SK-N-SH (cell line): ENCODE measurements at regions of chr2 and their contacts with region 1.

Region 1: GRCh38 chr2:219002395-219003266 is 9.4 kb upstream of the CRYBA2 start:
- DNase-seq: peak; percentile 89
- H3K4me3 ChIP-seq: peak overlapping the region; percentile 51 to 54
- H3K27ac ChIP-seq: peak overlapping the region in 1 of 2 experiments; percentile 99; a peak in 2 of 4 replicates
- H3K4me1 ChIP-seq: peaks cover 0 to 60% of the 10 kb centered on the region in 2 experiments; a peak in 2 of 4 replicates
- H3K27me3 ChIP-seq: peaks cover 18% of the 10 kb centered on the region; the same call in 1 of the 2 replicates
- CTCF ChIP-seq: peak; percentile 35; the same call in 1 of the 2 replicates
- EP300 ChIP-seq: no peak
- RAD21 ChIP-seq: peak; percentile 66

Region 2: GRCh38 chr2:218876562-218877219 is 125.9 kb before region 1 on chr2:
- CTCF ChIA-PET with region 1: interaction called, 28 read pairs
- POLR2A ChIA-PET with region 1: no interaction called
- DNase-seq: peak; percentile 88
- H3K4me3 ChIP-seq: no peak overlapping the region
- H3K27ac ChIP-seq: peak overlapping the region in 1 of 2 experiments; percentile 78; a peak in 2 of 4 replicates
- H3K4me1 ChIP-seq: peaks cover 0 to 54% of the 10 kb centered on the region in 2 experiments; a peak in 2 of 4 replicates
- H3K27me3 ChIP-seq: peaks cover 39% of the 10 kb centered on the region
- CTCF ChIP-seq: peak; percentile 95
- EP300 ChIP-seq: peak in 1 of 2 experiments; percentile 26; a peak in 1 of 4 replicates
- RAD21 ChIP-seq: peak; percentile 95

Region 3: DNA sequence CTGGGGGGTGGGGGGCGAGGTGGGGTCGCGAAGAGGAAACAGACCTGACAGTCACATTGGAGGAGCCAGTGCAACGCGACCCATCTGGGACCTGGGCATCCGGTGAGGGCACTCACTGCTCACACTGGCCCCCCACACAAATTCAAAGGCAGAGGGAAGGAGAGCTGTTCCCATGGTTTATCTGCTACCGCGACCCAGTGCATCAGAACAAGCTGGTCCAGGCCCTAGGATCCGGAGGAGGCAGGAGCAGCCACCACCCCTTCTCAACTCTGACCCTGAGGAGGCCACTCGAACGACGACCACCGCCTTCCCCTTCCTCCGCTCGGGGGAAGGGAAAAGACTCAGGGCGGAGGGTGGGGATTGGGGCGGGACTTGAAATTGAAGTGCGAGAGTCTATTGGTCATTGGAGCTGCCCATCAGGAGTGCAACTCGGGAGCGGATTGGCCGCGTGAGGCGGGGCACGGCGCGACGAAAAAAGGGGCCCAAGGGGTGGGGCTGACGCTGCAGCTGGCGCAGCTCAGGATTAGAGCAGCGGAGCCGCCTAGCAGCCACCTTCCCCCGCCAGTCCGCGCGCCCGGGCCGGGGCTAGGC is 43.4 kb before region 1 on chr2 and contains the start of gene CDK5R2:
- CTCF ChIA-PET with region 1: interaction called, 12 read pairs
- POLR2A ChIA-PET with region 1: interaction called, 13 read pairs
- DNase-seq: peak; percentile 98
- H3K4me3 ChIP-seq: peak within 1 kb of the TSS; percentile 60 to 63
- H3K27ac ChIP-seq: peak within 1 kb of the TSS in 1 of 2 experiments; percentile 94; a peak in 2 of 4 replicates
- H3K4me1 ChIP-seq: peaks cover 8 to 47% of the 10 kb centered on the region in 2 experiments; a peak in 2 of 4 replicates
- H3K27me3 ChIP-seq: peaks cover 41% of the 10 kb centered on the region
- CTCF ChIP-seq: no peak
- EP300 ChIP-seq: peak in 1 of 2 experiments; percentile 32; a peak in 1 of 4 replicates
- RAD21 ChIP-seq: no peak
- polyA plus RNA-seq, gene CDK5R2: 0.19 and 0.26 TPM in 2 replicates

Region 4: GRCh38 chr2:219057709-219058540 is 55.3 kb after region 1 on chr2:
- CTCF ChIA-PET with region 1: interaction called, 11 read pairs
- POLR2A ChIA-PET with region 1: interaction called, 3 read pairs
- DNase-seq: peak; percentile 86
- H3K4me3 ChIP-seq: peak overlapping the region in 1 of 2 experiments; percentile 35; a peak in 1 of 4 replicates
- H3K27ac ChIP-seq: no peak overlapping the region
- H3K4me1 ChIP-seq: peaks cover 0 to 16% of the 10 kb centered on the region in 2 experiments; a peak in 1 of 4 replicates
- H3K27me3 ChIP-seq: peaks cover 43% of the 10 kb centered on the region
- CTCF ChIP-seq: peak; percentile 78
- EP300 ChIP-seq: no peak
- RAD21 ChIP-seq: peak; percentile 77

Region 5: DNA sequence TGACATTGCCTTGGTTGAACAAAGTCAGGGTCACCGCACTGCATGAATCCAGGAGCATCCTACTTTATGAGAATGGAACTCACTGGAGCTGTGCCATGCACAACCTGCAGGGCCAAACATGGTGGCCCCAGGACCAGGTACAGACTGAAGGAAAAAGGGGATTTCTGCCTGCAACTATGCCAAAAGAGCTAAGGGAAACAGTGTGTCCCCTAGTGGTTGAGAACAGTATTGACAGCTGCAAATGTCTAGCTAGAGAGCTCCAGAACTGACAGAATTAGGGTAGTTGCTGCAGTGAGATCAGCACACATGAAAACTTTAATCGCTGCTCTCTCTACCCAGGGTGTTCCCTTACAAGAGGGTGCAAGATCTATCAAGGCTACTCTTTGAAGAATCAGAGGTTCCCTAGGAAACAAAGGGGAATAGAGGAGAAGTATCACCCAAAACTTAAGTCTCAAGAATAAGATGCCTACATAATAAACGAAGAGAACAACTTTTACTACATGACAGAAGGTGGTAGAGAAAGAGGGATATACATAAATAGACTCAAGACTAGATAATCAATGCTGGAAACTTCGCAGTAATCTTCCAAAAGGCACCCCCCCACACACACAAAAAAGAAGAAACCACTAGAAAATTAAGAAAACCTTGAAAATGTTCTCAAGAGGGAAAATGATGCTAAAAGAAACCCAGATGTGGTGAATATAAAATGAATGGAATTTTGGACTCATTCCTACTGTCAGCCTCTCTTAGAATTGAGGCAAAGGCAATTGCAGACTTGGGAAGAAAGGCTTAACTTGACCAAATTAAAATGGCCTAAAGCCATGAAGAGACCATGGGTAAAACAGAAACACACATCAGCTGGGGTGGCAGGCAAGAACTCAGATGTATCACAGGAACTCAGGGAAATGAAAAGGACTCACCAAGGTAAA is 101.7 kb after region 1 on chr2:
- CTCF ChIA-PET with region 1: interaction called, 12 read pairs
- POLR2A ChIA-PET with region 1: no interaction called
- DNase-seq: peak; percentile 66
- H3K4me3 ChIP-seq: no peak overlapping the region; a peak in 1 of 4 replicates
- H3K27ac ChIP-seq: no peak overlapping the region
- H3K4me1 ChIP-seq: no peaks in the 10 kb centered on the region
- H3K27me3 ChIP-seq: no peaks in the 10 kb centered on the region
- CTCF ChIP-seq: peak; percentile 71
- EP300 ChIP-seq: no peak
- RAD21 ChIP-seq: peak; percentile 70